Tibial artery (tissue), 4 donors: ENCODE measurements at regions of chr19 and their contacts with region 1.

Region 1: GRCh38 chr19:9934132-9934950 is 2.0 kb downstream of the OLFM2 start:
- DNase-seq: peak; percentile 62 to 77
- H3K4me3 ChIP-seq: no peak overlapping the region
- H3K27ac ChIP-seq: no peak overlapping the region
- H3K4me1 ChIP-seq: peaks cover 0 to 38% (median 22%) of the 10 kb centered on the region in 4 donors
- H3K27me3 ChIP-seq: peaks cover 4 to 62% of the 10 kb centered on the region in 2 donors
- CTCF ChIP-seq: peak; percentile 76 to 81

Region 2: GRCh38 chr19:9986787-9987281 is 52.5 kb after region 1 on chr19:
- intact Hi-C with region 1: no loop called
- DNase-seq: peak; percentile 59 to 80
- H3K4me3 ChIP-seq: no peak overlapping the region
- H3K27ac ChIP-seq: peak overlapping the region; percentile 41 to 53
- H3K4me1 ChIP-seq: peaks cover 0 to 16% (median 12%) of the 10 kb centered on the region in 4 donors
- H3K27me3 ChIP-seq: no peaks in the 10 kb centered on the region
- CTCF ChIP-seq: no peak

Region 3: GRCh38 chr19:10000171-10000826 is 66.0 kb after region 1 on chr19:
- intact Hi-C with region 1: loop called (anchors 2 kb)
- DNase-seq: peak; percentile 67 to 77
- H3K4me3 ChIP-seq: no peak overlapping the region
- H3K27ac ChIP-seq: no peak overlapping the region
- H3K4me1 ChIP-seq: no peaks in the 10 kb centered on the region
- H3K27me3 ChIP-seq: peaks cover 0 to 4% of the 10 kb centered on the region in 2 donors
- CTCF ChIP-seq: peak; percentile 30 to 53

Region 4: GRCh38 chr19:10027158-10027693 is 92.9 kb after region 1 on chr19:
- intact Hi-C with region 1: loop called (anchors 1 kb)
- DNase-seq: no peak
- H3K4me3 ChIP-seq: no peak overlapping the region
- H3K27ac ChIP-seq: no peak overlapping the region
- H3K4me1 ChIP-seq: peaks cover 0 to 7% (median 5%) of the 10 kb centered on the region in 4 donors
- H3K27me3 ChIP-seq: peaks cover 0 to 29% of the 10 kb centered on the region in 2 donors
- CTCF ChIP-seq: no peak

Region 5: GRCh38 chr19:10251792-10252694 is 317.7 kb after region 1 on chr19 and contains the start of gene MRPL4:
- intact Hi-C with region 1: loop called (anchors 2 kb)
- DNase-seq: peak; percentile 97 to 98
- H3K4me3 ChIP-seq: peak within 1 kb of the TSS; percentile 83 to 91
- H3K27ac ChIP-seq: peak within 1 kb of the TSS; percentile 74 to 79
- H3K4me1 ChIP-seq: peaks cover 0 to 25% (median 13%) of the 10 kb centered on the region in 4 donors
- H3K27me3 ChIP-seq: no peaks in the 10 kb centered on the region
- CTCF ChIP-seq: no peak